Endothelial cell of umbilical vein (primary cell): ENCODE measurements at regions of chr14 and their contacts with region 1.

Region 1: DNA sequence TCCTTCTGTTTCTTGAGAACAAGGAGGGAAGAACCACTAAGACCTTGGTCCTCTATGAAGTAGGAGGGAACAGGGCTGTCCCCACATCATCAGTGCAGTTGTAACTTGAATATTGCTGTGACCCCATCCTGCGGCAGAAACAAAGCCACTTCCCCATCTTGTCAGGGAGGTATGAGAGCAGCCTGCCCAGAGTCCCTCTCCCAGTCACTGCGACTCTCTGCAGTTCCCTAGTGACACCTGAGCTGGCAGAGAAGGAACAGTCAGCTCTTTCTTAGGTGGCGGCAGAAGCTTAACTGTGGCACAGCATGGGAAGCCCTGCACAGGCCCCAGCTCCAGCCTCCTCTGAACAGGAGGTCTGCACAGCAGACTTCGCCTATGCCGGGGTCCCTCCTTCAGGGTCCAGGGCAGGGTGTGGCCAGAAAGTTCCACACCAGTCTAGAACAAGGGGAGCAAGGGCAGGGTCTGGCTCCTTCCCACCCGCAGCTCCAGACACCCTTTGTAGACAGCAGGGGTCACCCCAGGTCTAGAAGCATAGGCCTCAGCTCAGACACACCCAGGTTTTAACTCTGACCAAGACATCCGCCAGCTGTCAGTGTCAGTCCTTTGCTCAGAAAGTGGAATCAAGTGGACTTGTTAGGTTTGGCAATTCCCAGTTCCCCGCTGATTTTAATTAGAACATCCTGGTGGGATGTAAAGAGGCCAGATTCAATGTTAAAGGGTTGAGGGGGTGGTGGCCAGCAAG is 36.8 kb downstream of the DEGS2 start:
- DNase-seq: no peak
- H3K4me3 ChIP-seq: no peak overlapping the region
- H3K27ac ChIP-seq: no peak overlapping the region
- H3K4me1 ChIP-seq: no peaks in the 10 kb centered on the region
- H3K27me3 ChIP-seq: no peaks in the 10 kb centered on the region
- CTCF ChIP-seq: no peak
- POLR2A ChIP-seq: no peak

Region 2: GRCh38 chr14:99329711-99330315 is 792.8 kb before region 1 on chr14:
- CTCF ChIA-PET with region 1: no interaction called
- POLR2A ChIA-PET with region 1: no interaction called
- dilution Hi-C with region 1: no loop called
- intact Hi-C with region 1: no loop called
- DNase-seq: no peak
- H3K4me3 ChIP-seq: no peak overlapping the region
- H3K27ac ChIP-seq: no peak overlapping the region
- H3K4me1 ChIP-seq: no peaks in the 10 kb centered on the region
- H3K27me3 ChIP-seq: no peaks in the 10 kb centered on the region
- CTCF ChIP-seq: no peak
- POLR2A ChIP-seq: no peak

Region 3: DNA sequence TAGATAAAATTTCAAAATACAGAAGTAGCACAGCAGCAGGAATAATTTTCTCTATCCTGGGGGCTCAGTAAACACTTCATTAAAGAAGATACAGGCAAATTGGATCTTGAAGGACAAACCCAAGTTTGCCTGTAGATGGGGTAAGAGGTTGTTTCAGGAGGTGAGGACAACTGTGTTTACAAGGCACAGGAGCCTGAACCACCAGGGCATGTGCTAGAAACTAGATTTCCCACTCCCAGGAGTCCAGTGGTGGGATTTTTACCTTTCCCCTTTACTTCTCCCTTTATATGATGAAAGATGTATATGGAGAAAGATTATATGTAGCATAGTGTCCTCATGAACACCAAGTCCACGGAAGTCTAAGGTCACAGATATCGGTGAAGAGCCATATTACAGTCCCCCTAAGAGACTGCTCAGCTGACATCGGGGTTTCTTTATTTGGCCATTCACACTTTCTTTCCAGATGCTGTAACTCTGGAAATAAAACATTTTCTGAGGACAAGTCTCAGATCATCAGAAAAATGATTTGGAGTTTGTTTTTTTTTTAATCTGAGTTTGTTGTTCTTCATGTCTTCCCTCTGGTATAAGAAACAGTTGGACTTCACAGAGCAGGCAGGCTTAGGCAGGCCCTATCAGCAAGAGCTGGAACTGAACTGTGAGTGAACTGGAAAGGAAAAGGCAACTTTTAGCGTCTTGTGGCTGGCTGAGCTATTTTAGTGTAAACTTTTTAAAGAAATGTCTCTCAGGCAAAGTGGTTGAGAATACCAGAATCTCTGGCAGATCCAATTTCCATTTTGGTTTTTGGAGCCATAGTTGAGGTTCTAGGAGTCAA is 65.5 kb before region 1 on chr14:
- CTCF ChIA-PET with region 1: interaction called, 10 read pairs
- POLR2A ChIA-PET with region 1: no interaction called
- dilution Hi-C with region 1: no loop called
- intact Hi-C with region 1: no loop called
- DNase-seq: peak; percentile 39
- H3K4me3 ChIP-seq: no peak overlapping the region
- H3K27ac ChIP-seq: no peak overlapping the region
- H3K4me1 ChIP-seq: peaks cover 9% of the 10 kb centered on the region
- H3K27me3 ChIP-seq: no peaks in the 10 kb centered on the region
- CTCF ChIP-seq: peak in 1 of 2 donors; percentile 28
- POLR2A ChIP-seq: no peak